ENCODE measurements at regions of chr11 and their contacts with region 1.

Region 1: DNA sequence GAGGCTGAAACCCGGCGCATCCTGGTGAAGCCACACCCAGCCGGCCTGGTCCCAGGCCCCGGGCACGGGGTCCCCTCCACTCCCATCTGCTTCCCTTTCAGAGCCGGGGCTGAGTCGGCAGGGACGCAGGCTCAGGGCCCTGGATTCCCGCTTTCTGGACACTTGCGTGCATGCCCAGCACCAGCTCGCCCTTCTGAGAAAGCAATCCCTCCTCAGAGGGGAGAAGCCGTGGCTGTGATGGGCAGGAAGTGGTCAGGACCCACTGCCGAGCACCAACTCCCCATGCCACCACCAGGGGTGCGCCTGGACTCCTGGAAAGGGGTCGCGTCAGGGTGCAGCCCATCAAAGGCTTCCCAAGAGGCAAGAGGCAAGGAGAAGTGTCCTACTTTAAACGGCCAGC is 15.1 kb downstream of the CDKN1C start:
- DNase-seq: no peak
- H3K4me3 ChIP-seq: no peak overlapping the region
- H3K27ac ChIP-seq: no peak overlapping the region
- H3K4me1 ChIP-seq: no peaks in the 10 kb centered on the region
- H3K27me3 ChIP-seq: peaks cover 22% of the 10 kb centered on the region
- CTCF ChIP-seq: no peak

Region 2: GRCh38 chr11:2653930-2654739 is 216.3 kb before region 1 on chr11:
- CTCF ChIA-PET with region 1: no interaction called
- dilution Hi-C with region 1: loop called (anchors 5 kb)
- in situ Hi-C with region 1: no loop called
- intact Hi-C with region 1: no loop called
- DNase-seq: no peak
- H3K4me3 ChIP-seq: no peak overlapping the region
- H3K27ac ChIP-seq: no peak overlapping the region
- H3K4me1 ChIP-seq: no peaks in the 10 kb centered on the region
- H3K27me3 ChIP-seq: no peaks in the 10 kb centered on the region
- CTCF ChIP-seq: no peak

Region 3: GRCh38 chr11:2699531-2700414 is 170.7 kb before region 1 on chr11 and contains the start of gene KCNQ1OT1:
- CTCF ChIA-PET with region 1: no interaction called
- dilution Hi-C with region 1: no loop called
- in situ Hi-C with region 1: loop called in 1 of 2 experiments (anchors 10 kb)
- intact Hi-C with region 1: no loop called
- DNase-seq: peak; percentile 86
- H3K4me3 ChIP-seq: peak within 1 kb of the TSS; percentile 50 to 84 (median 78)
- H3K27ac ChIP-seq: peak within 1 kb of the TSS; percentile 46
- H3K4me1 ChIP-seq: no peaks in the 10 kb centered on the region
- H3K27me3 ChIP-seq: no peaks in the 10 kb centered on the region
- CTCF ChIP-seq: no peak
- total RNA-seq, gene KCNQ1OT1: 0.82 to 1.0 TPM

Region 4: DNA sequence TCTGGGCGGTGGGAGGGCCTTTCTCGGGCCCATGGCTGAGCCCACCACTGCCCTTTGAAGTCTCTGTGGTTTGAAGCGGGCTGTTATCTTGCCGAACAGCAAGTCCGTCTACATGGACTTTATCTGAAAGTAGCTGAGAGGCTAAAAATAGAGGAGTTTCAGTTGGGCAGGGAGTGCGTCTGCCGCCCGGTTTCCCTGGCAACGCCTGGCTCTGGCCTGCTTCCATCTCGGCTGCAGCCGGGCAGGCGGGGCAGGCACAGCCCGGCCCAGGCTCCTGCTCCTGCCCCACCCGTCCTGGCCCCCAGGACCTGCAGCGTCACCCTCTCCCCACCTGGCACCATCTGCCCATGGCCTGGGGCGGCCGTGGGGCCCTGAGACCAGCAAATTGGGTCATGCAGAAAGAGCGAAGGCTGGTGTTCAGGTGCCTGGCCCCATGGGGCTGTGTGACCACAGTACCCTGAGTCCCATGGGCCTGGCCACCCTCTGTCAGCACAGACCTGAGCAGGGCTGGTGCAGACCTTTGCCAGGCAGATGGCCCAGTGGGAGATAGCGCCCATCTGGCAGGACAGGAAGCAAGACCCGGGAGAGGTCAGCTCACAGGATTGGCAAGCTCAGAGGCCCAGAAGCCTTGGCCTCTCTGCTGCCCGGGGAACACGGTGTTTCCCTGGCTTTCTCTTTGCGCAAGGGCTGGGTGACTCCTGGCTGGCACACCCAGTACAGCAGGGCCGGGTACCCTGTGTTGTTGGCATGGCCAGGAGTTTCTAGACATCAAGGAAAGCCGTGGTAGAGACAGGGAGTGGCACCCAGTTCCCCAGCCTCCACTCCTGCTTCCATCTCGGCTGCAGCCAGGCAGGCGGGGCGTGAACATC is 91.6 kb before region 1 on chr11:
- CTCF ChIA-PET with region 1: no interaction called
- dilution Hi-C with region 1: loop called (anchors 5 kb)
- in situ Hi-C with region 1: no loop called
- intact Hi-C with region 1: no loop called
- DNase-seq: peak; percentile 30
- H3K4me3 ChIP-seq: no peak overlapping the region
- H3K27ac ChIP-seq: no peak overlapping the region
- H3K4me1 ChIP-seq: peaks cover 15% of the 10 kb centered on the region
- H3K27me3 ChIP-seq: peaks cover 6% of the 10 kb centered on the region
- CTCF ChIP-seq: peak in 1 of 2 donors; percentile 57

Region 5: GRCh38 chr11:2834503-2835273 is 35.8 kb before region 1 on chr11:
- CTCF ChIA-PET with region 1: no interaction called
- dilution Hi-C with region 1: loop called (anchors 5 kb)
- in situ Hi-C with region 1: no loop called
- intact Hi-C with region 1: no loop called
- DNase-seq: peak; percentile 13
- H3K4me3 ChIP-seq: no peak overlapping the region
- H3K27ac ChIP-seq: no peak overlapping the region
- H3K4me1 ChIP-seq: no peaks in the 10 kb centered on the region
- H3K27me3 ChIP-seq: peaks cover 11% of the 10 kb centered on the region
- CTCF ChIP-seq: no peak